ENCODE measurements at regions of chr2 and their contacts with region 1.

Region 1: GRCh38 chr2:218839430-218839829 is 7.8 kb upstream of the PRKAG3 start:
- DNase-seq: no peak
- ATAC-seq: no peak
- H3K4me3 ChIP-seq: no peak overlapping the region
- H3K4me3 Mint-ChIP-seq: no peak overlapping the region
- H3K27ac ChIP-seq: no peak overlapping the region
- H3K27ac Mint-ChIP-seq: no peak overlapping the region
- H3K4me1 ChIP-seq: no peaks in the 10 kb centered on the region
- H3K4me1 Mint-ChIP-seq: no peaks in the 10 kb centered on the region
- H3K27me3 ChIP-seq: peaks cover 6 to 20% of the 10 kb centered on the region in 2 experiments
- H3K27me3 Mint-ChIP-seq: peaks cover 35 to 58% of the 10 kb centered on the region in 2 donors

Region 2: GRCh38 chr2:218806346-218806978 is 33.0 kb before region 1 on chr2:
- CTCF ChIA-PET with region 1: interaction called in 1 of 2 experiments, 3 read pairs
- POLR2A ChIA-PET with region 1: interaction called in 1 of 2 experiments, 12 read pairs
- DNase-seq: no peak
- ATAC-seq: no peak
- H3K4me3 ChIP-seq: no peak overlapping the region
- H3K4me3 Mint-ChIP-seq: no peak overlapping the region
- H3K27ac ChIP-seq: no peak overlapping the region
- H3K27ac Mint-ChIP-seq: no peak overlapping the region
- H3K4me1 ChIP-seq: peaks cover 0 to 13% of the 10 kb centered on the region in 2 experiments
- H3K4me1 Mint-ChIP-seq: peaks cover 5% of the 10 kb centered on the region in 3 donors
- H3K27me3 ChIP-seq: peaks cover 0 to 17% of the 10 kb centered on the region in 2 experiments
- H3K27me3 Mint-ChIP-seq: peaks cover 21 to 23% of the 10 kb centered on the region in 2 donors

Region 3: DNA sequence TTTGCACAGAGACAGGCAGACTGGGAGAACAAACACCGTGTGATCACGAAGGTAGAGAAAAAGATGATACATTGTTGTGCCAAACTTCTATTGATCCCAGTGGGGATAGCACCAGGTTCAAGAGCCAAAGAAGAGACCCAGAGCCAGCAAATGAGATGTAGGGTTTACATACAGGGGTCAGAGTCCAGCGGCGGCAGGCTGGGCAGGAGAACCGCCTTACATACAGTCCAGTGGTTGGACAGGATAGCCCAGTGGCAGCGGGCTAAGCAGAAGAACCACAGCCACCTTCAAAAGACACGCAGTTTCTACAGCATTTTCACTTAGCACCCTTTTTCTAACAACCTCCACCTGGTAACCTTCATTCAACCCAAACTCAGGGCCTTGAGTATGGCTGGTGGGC is 1720.8 kb after region 1 on chr2:
- CTCF ChIA-PET with region 1: no interaction called
- POLR2A ChIA-PET with region 1: no interaction called
- DNase-seq: no peak
- ATAC-seq: no peak
- H3K4me3 ChIP-seq: no peak overlapping the region
- H3K4me3 Mint-ChIP-seq: no peak overlapping the region
- H3K27ac ChIP-seq: no peak overlapping the region
- H3K27ac Mint-ChIP-seq: no peak overlapping the region
- H3K4me1 ChIP-seq: no peaks in the 10 kb centered on the region
- H3K4me1 Mint-ChIP-seq: no peaks in the 10 kb centered on the region
- H3K27me3 ChIP-seq: peaks cover 0 to 4% of the 10 kb centered on the region in 2 experiments
- H3K27me3 Mint-ChIP-seq: no peaks in the 10 kb centered on the region

Measured in T-cell (primary cell).